ENCODE measurements at regions of chr4 and their contacts with region 1.

Region 1: DNA sequence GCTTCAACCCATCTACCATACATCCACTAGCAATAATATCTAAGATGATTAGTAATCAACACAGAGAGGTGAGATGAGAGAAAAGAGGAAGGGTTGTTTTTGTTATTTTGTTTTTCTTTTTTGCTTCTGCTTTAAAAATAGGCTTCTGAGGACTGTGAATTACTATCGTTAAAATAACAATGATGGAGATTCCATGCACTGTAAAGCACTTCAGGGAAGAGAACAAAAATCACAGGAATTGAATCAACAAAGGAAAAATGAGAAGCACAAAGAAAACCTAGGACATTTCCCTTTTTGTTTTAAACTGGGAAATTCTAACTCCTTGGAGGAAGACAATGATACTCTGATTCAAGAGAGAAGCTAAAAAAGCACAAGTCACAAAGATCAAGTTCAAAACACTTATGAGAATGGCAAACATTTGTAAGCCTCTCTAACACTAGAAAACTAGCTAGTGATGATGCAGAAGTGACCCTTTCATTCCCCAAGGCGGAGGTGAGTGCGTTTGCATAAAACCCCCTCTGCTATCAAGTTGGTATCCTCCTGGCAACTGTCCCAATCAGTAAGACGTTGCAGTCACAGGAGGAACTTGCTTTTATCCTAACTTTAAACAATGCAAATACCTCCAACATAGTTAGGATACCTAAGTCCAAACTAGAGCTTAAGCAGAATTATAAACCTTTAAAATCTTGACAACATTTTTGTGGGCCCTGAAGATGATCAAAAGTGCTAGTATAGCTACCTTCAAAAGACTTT is 308.5 kb downstream of the CAMK2D start:
- DNase-seq: no peak
- ATAC-seq: no peak

Region 2: DNA sequence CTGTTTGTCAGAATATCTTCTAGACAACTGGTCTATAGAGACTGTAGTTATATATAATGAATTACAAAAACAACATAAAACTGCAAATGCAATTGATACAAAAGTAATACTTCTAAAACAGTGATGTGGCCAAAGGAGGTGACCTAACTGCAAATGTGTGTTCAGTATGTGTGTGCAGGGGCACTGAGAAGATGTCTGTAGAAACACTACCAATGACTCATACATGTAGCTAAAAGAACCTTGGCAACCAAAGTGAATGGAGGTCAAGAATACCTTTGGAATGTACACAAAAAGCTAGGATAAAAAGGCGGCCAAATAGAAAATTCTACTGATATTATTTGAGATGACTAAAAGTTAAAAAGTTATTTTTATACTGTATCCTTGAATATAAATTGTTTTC is 46.7 kb after region 1 on chr4:
- intact Hi-C with region 1: loop called (anchors 10 kb)
- DNase-seq: no peak
- ATAC-seq: no peak

Region 3: GRCh38 chr4:113528395-113528794 is 75.4 kb after region 1 on chr4:
- intact Hi-C with region 1: no loop called
- DNase-seq: no peak
- ATAC-seq: no peak

Measured in Right ventricle myocardium inferior (tissue), 1 donor.